ENCODE measurements at regions of chr1 and their contacts with region 1.

Region 1: DNA sequence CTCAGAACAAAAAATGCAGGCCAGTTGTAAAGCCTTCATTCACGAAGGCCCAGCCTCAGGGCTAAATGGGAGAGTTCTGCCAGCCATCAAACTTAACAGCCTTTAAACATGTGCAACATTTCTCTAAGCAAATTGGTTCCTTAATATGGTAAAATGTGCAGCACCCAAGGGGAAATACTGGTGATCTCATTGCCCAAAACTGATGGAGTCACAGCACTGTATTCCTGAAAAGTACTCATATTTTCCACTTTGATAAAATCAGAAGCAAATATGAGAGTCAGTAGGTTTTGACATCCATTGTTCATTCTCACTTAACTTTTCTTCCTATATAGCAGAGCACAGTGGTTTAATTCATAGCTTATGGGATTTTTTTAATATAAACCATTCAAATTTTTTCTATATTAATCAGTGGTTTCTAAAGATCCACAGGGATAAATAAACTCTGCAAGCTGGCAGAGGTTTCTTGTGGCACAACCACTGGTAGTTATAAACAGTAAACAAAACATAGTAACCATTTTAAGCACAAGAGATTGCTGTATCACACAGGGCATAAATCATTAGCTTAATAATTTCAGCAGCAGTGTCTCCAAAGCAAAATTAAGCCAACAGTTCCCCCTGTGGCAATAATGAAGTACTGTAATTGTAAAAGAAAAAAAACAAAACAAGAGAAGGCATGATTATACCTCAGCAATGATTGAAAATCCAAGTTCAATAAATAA is 106.9 kb upstream of the LYPLAL1 start:
- DNase-seq: peak; percentile 75
- H3K4me3 ChIP-seq: no peak overlapping the region
- H3K27ac ChIP-seq: no peak overlapping the region
- H3K4me1 ChIP-seq: no peaks in the 10 kb centered on the region
- H3K27me3 ChIP-seq: no peaks in the 10 kb centered on the region
- CTCF ChIP-seq: peak; percentile 37 to 39
- POLR2A ChIP-seq: no peak

Region 2: DNA sequence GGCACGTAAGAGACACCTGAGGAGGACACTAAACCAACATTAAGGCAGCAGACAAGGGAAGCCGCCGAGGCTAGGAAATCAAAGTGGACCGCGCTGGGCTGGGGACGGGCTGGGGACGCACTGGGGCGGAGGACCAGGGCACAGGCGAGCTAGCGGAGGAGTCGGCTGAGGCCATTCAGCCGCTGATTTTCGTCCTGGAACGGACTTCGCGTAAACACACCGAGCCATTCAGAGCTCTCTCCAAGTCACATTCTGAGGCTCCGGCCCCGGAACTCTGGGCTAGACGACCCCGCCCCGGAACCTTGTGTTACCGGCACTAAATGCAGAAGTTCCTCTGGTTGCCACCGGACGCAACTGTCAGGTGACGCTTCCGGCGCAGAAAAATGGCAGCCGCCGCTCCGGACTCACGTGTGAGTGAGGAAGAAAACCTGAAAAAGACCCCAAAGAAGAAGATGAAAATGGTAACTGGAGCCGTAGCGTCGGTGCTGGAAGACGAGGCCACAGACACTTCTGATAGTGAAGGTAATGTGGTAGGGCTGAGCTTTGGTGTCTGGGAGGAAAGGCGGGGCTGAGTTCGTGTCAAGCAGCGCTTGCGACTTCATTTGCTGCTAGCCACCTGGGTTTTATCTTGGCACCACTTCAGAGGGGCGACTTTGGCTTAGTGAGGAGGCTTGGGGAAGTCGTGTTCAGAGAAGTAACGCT is 781.7 kb before region 1 on chr1 and contains the start of gene RRP15:
- CTCF ChIA-PET with region 1: no interaction called
- POLR2A ChIA-PET with region 1: no interaction called
- dilution Hi-C with region 1: no loop called
- intact Hi-C with region 1: no loop called
- DNase-seq: peak; percentile 80
- H3K4me3 ChIP-seq: peak within 1 kb of the TSS; percentile 66 to 81 (median 76)
- H3K27ac ChIP-seq: peak within 1 kb of the TSS; percentile 37
- H3K4me1 ChIP-seq: peaks cover 11% of the 10 kb centered on the region
- H3K27me3 ChIP-seq: peaks cover 0 to 2% of the 10 kb centered on the region in 2 experiments
- CTCF ChIP-seq: no peak
- POLR2A ChIP-seq: peak; percentile 56
- total RNA-seq, gene RRP15: 17.3 and 24.4 TPM in 2 replicates

Region 3: DNA sequence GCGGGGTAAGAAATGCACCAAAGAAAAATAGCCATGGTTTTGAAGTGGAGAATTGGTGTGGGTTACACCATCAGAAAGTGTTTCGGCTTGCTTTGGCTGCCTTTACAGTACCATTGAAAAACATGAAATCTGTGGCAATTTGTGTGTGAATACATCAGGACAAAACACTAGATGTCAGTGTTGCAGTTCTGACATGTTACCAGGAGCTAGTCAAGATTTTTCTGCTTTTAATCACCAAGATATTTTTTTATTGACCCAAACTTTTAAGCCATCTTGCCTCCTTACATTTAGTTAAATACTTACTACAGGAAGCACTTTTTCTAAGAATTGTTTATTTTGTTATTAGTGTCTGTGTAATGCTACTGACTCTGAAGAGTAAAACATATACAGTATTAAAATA is 767.4 kb before region 1 on chr1:
- CTCF ChIA-PET with region 1: interaction called, 32 read pairs
- POLR2A ChIA-PET with region 1: no interaction called
- dilution Hi-C with region 1: no loop called
- intact Hi-C with region 1: loop called (anchors 1 kb)
- DNase-seq: peak; percentile 61
- H3K4me3 ChIP-seq: no peak overlapping the region
- H3K27ac ChIP-seq: no peak overlapping the region
- H3K4me1 ChIP-seq: no peaks in the 10 kb centered on the region
- H3K27me3 ChIP-seq: no peaks in the 10 kb centered on the region
- CTCF ChIP-seq: peak; percentile 27 to 39
- POLR2A ChIP-seq: no peak

Region 4: GRCh38 chr1:218339267-218339831 is 727.4 kb before region 1 on chr1:
- CTCF ChIA-PET with region 1: interaction called, 161 read pairs
- POLR2A ChIA-PET with region 1: no interaction called
- dilution Hi-C with region 1: no loop called
- intact Hi-C with region 1: loop called (anchors 1 kb)
- DNase-seq: peak; percentile 74
- H3K4me3 ChIP-seq: no peak overlapping the region
- H3K27ac ChIP-seq: no peak overlapping the region
- H3K4me1 ChIP-seq: no peaks in the 10 kb centered on the region
- H3K27me3 ChIP-seq: no peaks in the 10 kb centered on the region
- CTCF ChIP-seq: peak; percentile 41 to 48
- POLR2A ChIP-seq: no peak

Region 5: DNA sequence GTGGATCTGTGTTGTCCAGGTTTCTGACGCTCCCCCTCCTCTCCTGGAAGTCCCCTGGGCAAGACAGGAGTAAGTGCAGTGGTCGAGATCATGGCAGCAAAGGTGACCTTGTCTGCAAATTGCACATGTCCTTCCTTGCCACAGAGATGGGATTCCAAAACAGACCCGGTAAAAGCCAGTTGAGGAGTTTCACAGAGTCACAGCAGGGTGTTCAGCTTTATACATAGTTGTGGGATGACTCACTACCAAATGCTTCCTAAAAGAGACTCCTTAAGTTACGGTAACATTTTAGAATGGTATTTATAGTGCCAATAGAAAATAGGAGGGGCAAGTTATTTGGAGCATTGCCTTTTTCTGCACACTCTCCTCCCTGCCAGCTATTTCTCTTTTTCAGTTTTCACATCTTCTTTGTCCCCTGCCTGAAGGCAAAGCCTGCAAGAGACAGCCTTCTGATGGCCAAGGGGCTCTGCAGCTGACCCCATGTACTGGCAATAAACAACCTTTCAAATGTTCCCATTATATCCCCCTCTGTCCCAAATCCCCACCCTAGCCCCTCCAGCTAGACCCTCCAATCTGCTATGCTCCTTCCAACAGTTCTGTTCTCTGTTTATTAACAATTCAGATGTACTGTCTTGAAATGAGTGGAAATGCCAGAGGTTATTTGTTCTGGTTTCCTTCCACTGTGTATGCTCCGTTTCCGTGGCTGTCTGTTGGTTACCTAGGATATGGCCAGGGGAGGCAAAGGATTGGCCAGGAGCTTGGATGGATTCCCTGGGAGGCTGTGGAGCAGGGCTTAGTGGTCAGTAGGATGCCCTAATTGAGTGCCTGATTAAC is 606.7 kb before region 1 on chr1:
- CTCF ChIA-PET with region 1: interaction called, 9 read pairs
- POLR2A ChIA-PET with region 1: no interaction called
- dilution Hi-C with region 1: no loop called
- intact Hi-C with region 1: loop called (anchors 5 kb)
- DNase-seq: peak; percentile 82
- H3K4me3 ChIP-seq: peak overlapping the region in 1 of 3 experiments; percentile 44
- H3K27ac ChIP-seq: peak overlapping the region; percentile 98
- H3K4me1 ChIP-seq: peaks cover 44% of the 10 kb centered on the region
- H3K27me3 ChIP-seq: no peaks in the 10 kb centered on the region
- CTCF ChIP-seq: no peak
- POLR2A ChIP-seq: no peak

Region 6: GRCh38 chr1:218705911-218706893 is 360.6 kb before region 1 on chr1:
- CTCF ChIA-PET with region 1: interaction called, 9 read pairs
- POLR2A ChIA-PET with region 1: no interaction called
- dilution Hi-C with region 1: no loop called
- intact Hi-C with region 1: loop called (anchors 5 kb)
- DNase-seq: peak; percentile 74
- H3K4me3 ChIP-seq: no peak overlapping the region
- H3K27ac ChIP-seq: peak overlapping the region; percentile 86
- H3K4me1 ChIP-seq: peaks cover 26% of the 10 kb centered on the region
- H3K27me3 ChIP-seq: no peaks in the 10 kb centered on the region
- CTCF ChIP-seq: no peak
- POLR2A ChIP-seq: no peak

Region 7: DNA sequence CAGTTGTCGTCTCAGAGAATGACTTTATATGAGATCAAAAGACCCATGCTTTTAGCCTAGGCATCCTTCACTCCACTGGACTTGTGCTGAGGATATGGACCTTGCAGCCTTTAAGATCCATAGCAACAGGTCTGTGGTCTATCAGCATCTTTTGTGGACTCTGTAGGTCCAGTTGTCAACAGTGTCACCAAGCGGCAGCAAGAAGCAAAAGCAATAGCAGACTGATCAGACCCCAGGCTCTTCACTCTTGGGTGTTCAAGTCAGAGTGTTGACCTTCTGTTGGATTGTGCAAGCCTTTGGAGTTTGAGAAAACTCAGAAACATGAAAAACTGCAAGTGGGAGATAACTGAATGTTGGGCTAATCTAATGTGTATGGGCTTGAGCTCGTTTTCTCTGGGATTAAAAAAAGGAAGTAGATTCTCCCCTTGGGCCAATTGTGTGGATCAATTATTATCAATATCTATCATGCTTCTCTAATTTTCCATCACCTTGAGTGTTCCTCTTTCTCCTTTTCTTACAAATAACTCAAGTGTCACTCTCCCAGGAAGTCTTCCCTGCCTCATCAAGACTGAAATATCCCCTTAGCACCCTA is 251.1 kb after region 1 on chr1:
- CTCF ChIA-PET with region 1: no interaction called
- POLR2A ChIA-PET with region 1: no interaction called
- dilution Hi-C with region 1: no loop called
- intact Hi-C with region 1: loop called (anchors 1 kb)
- DNase-seq: peak; percentile 44
- H3K4me3 ChIP-seq: no peak overlapping the region
- H3K27ac ChIP-seq: no peak overlapping the region
- H3K4me1 ChIP-seq: peaks cover 7% of the 10 kb centered on the region
- H3K27me3 ChIP-seq: no peaks in the 10 kb centered on the region
- CTCF ChIP-seq: peak in 1 of 2 donors; percentile 18
- POLR2A ChIP-seq: no peak

Region 8: DNA sequence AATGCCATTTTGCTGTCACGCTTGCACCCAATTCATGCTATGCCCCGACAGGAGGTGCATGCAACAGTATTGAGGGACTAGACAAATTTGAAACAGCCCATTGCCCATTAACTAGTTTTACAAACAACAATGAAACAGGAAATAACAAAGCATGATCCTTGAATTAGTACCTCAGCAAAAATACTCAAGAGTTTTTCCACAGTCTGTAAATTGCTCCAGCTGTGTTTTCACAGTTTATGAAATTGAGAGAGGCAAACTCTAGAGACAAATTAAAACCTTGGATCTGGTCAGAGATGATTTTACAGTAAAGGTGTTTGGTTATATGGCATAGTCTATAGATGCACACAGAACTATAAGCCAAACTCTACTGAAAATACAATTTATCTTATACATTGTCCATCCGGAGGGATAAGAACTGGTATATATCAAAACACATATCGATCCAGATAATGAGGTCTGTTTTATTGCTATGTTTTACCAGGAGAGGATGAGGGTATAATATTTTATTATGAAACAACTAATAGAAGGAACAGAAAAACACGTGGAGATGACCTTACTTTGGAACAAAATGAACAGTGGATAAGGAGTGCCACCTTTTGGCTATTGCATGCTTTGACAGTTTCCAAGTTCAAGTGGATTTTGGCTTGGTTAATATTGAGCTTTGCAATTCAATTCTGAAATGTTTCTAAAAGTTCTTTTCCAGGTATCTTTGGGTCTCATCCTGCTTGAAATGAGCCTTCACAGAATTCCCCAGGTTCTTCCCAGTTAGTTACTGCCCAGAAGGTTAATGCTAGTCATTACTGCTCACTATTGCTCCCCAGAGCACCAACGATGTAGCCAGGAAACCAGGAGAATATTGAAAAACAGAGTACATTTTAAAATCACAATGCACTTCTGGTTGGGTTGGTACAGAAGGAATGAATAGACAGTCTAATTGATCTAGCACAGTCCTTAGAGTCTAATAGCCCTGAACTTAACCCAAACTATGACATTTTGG is 500.5 kb after region 1 on chr1:
- CTCF ChIA-PET with region 1: interaction called, 19 read pairs
- POLR2A ChIA-PET with region 1: no interaction called
- dilution Hi-C with region 1: no loop called
- intact Hi-C with region 1: no loop called
- DNase-seq: peak; percentile 45
- H3K4me3 ChIP-seq: no peak overlapping the region
- H3K27ac ChIP-seq: no peak overlapping the region
- H3K4me1 ChIP-seq: no peaks in the 10 kb centered on the region
- H3K27me3 ChIP-seq: peaks cover 0 to 3% of the 10 kb centered on the region in 2 experiments
- CTCF ChIP-seq: peak; percentile 19 to 32
- POLR2A ChIP-seq: no peak

Measured in endothelial cell of umbilical vein (primary cell).